PC-9 (cell line): ENCODE measurements at regions of chr5 and their contacts with region 1.

Region 1: DNA sequence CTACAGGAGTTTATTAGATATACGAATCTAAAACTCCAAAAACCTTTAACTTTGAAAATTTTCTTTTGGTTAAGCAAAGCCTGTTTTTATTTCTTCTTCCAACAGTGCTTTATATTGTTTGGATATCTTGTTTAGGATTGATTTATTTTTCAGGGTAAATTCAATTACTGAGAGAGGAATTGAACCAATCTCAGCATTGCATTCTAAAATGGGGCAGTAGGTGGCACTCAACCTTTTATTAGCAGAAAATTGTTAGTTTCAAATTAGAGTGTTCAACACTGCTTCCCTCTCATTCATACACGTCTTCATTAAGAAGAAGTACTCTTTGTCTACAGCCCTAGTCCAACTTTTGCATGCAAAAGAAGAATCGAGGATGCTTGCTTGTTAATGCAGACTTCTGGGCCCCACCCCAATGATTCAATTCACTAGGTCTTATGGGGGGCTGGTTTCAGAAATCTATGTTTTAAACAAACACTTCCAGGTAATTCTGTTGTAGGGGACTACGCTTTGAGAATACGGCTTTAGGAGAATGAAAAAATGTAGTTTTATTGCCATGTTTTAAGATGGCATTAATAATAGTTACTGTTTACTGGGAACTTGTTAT is 26.6 kb downstream of the MRPL22 start:
- DNase-seq: no peak
- H3K4me3 ChIP-seq: no peak overlapping the region
- H3K27ac ChIP-seq: no peak overlapping the region
- H3K4me1 ChIP-seq: no peaks in the 10 kb centered on the region
- H3K27me3 ChIP-seq: no peaks in the 10 kb centered on the region
- CTCF ChIP-seq: peak; percentile 73

Region 2: DNA sequence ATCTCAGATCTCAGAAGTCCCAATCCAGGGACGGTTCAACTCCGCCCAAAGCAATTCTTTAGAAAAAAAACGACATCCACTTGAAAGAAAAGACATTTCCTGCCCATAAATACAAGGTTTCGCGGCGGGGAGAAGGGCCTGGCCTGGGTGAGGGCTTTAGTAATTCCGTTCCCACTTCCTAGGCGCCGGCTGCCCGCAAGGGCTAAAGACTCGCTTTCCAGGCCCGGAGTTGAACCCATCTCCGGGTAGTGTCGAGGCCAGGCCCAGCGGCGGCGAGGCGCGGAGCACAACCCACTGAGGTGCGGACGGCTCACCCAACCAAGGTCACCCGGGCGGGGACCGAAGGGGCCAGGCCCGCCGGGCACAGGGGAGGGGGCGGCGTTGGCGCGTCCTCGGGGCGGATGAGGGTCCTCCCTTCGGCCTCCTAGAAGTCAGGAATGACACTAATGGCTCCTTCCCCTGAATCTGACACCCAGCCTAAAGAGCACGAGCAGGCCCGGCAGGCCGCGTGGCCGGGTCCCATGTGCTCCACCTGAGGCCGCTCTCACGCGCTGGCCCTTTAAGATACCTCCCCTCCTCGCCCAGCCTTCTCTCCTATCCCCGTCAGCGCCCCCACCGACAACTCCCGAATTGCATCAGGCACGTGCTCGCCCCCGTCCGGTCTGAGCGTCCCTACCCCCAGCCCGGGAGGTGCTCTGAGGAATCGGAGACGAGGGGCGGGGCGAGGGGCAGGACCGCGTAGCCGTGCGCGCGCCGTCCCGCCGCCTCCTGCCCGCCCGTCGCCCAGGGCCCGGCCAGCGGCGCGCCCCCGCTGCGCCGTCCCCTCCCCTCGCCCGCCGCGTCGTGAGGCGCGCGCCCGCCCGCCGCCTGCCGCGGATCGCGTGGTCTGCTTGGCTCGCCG is 212.8 kb before region 1 on chr5:
- CTCF ChIA-PET with region 1: no interaction called
- POLR2A ChIA-PET with region 1: no interaction called
- intact Hi-C with region 1: no loop called
- DNase-seq: peak; percentile 96 to 100
- H3K4me3 ChIP-seq: peak overlapping the region; percentile 77
- H3K27ac ChIP-seq: peak overlapping the region; percentile 95
- H3K4me1 ChIP-seq: peaks cover 33% of the 10 kb centered on the region
- H3K27me3 ChIP-seq: no peaks in the 10 kb centered on the region
- CTCF ChIP-seq: no peak; the same call in 1 of the 2 replicates

Region 3: DNA sequence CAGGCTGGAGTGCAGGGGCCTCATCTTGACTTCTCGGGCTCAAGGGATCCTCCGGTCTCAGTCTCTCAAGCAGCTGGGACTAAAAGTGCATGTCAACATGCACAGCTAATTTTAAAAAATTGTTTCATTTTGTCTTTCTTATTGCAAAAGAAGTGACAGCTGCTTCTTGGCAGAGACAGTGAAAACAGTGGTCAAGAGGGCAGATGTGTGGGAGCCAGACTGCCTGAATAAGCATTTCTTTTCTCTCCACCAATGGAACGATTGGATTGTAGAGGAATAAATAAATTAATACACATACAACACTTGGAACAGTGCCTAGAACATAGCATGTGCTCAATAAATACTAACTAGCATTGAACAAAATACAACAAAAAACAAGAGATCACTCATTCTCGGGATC is 18.6 kb after region 1 on chr5:
- CTCF ChIA-PET with region 1: no interaction called
- POLR2A ChIA-PET with region 1: no interaction called
- intact Hi-C with region 1: no loop called
- DNase-seq: no peak
- H3K4me3 ChIP-seq: no peak overlapping the region
- H3K27ac ChIP-seq: no peak overlapping the region
- H3K4me1 ChIP-seq: no peaks in the 10 kb centered on the region
- H3K27me3 ChIP-seq: peaks cover 35% of the 10 kb centered on the region
- CTCF ChIP-seq: no peak

Region 4: DNA sequence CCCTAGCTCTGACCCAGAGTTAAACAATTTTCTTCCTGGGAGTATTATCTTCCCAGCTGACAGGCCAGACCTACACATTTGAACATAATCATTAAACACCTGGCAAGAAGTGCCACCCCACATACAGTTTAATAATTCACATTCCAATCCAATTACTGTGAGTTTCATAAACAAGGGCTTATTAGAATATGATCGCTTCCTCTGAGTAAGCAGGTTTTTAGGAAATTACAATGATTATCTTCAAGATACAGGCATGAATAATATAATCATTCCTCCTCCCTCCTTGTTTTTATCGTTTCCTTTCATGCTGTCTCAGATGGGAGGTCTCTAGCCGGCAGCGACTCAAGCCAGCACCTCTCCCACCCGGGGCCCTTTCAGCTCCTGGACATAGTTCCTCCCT is 30.2 kb after region 1 on chr5:
- CTCF ChIA-PET with region 1: no interaction called
- POLR2A ChIA-PET with region 1: no interaction called
- intact Hi-C with region 1: no loop called
- DNase-seq: peak in 1 of 2 experiments; percentile 68
- H3K4me3 ChIP-seq: no peak overlapping the region
- H3K27ac ChIP-seq: 0 out of 2 replicates have a peak overlapping the region, but pooled peaks have one; percentile 1
- H3K4me1 ChIP-seq: 0 out of 2 replicates have a peak, but pooled peaks cover 8% of the 10 kb centered on the region
- H3K27me3 ChIP-seq: no peaks in the 10 kb centered on the region
- CTCF ChIP-seq: no peak

Region 5: GRCh38 chr5:155027993-155028629 is 60.6 kb after region 1 on chr5:
- CTCF ChIA-PET with region 1: no interaction called
- POLR2A ChIA-PET with region 1: no interaction called
- intact Hi-C with region 1: loop called (anchors 2 kb)
- DNase-seq: no peak
- H3K4me3 ChIP-seq: no peak overlapping the region
- H3K27ac ChIP-seq: no peak overlapping the region
- H3K4me1 ChIP-seq: no peaks in the 10 kb centered on the region
- H3K27me3 ChIP-seq: peaks cover 5% of the 10 kb centered on the region; the same call in 1 of the 2 replicates
- CTCF ChIP-seq: peak; percentile 56; the same call in 1 of the 2 replicates